Head of caudate nucleus (tissue), 42 donors: ENCODE measurements at regions of chr2 and their contacts with region 1.

Region 1: DNA sequence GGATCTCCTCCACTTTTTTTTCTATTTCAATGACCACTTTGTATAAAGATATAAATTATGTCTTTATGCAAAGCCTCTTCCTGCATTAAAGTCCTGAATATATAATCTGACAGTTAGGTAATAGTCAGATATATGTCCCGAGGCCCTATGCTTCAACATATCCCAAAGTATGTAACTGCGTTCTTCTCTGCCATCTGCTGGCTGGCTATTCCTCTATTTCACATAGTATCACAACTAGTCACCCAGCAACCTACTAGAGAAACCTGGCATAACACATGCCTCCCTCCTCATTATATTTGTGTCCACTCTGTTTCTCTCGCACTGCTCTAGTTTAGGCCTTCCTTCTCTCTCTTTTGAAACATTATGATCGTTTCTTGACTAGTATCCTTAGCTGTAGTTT is 640.8 kb downstream of the DPP10 start:
- DNase-seq: peak in 28 of 42 donors; percentile 5 to 67 (median 36)

Region 2: DNA sequence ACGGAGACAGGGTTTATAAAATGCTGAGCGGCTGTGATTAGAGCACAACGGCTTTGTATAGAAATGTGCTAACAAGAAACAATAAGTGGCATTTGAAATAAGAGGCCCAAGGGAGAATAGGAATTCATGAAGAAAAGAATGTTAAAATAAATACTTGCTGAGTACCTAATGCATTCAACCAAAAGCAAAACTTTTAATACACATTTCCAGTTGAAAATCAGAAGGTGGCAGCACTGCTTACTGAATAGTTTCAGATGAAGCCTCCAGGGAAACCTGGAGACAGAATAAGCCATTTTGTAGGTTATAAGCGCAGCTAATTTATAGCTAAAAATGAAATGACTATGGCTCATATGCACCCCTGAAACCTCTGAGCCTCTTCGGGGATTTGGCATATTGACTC is 354.2 kb before region 1 on chr2:
- intact Hi-C with region 1: loop called (anchors 10 kb)
- DNase-seq: peak in 12 of 42 donors; percentile 12 to 65 (median 24)

Region 3: DNA sequence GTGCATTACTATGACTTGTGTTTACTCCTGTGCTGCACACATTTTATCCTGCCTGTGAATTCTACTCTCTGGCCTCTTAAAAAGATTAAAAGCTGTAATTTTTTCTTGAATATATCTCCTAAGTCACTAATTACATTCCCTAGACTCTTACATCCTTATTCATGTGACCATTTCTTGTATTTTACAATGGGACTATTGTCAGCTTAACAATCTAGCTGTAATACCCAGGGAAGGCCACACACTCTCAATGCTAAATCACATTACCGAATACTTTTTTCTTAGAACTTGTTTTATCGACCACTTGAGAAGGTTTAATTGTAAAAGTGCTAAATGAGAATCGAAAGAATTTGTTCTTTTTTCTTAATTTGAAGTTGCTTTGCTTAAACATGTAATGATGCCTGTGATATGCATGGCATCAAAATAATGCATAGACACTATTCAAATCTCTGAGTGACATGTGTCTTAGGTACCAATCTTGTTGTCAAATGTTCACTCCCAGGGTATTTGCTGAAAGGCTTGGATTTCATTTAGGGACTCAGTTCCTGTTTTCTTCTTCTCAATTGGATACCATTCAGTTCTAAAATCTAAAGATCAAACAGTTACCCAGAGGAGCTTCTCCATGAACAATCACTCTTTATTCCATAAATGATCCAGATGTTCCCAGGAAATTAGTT is 142.3 kb before region 1 on chr2:
- intact Hi-C with region 1: no loop called
- DNase-seq: no peak

Region 4: DNA sequence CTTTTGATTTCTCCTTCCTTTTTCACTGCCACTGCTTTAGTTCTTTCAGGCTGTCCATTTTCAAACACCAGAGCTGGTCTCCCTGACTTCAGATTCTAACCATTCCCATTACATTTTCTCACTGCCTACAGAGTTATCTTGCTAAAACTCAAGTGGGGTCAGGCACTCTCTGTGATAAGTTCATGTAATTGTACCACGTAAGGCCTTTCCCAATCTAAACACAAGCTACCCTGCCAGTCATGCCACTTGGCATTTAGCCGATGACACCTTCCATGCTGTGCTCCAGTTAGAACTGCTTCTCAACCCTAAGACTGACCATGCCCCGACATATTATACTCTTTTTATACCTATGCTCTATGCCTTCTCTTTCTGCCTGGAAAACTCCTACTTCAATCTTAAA is 48.4 kb before region 1 on chr2:
- intact Hi-C with region 1: no loop called
- DNase-seq: no peak

Region 5: GRCh38 chr2:116669782-116670181 is 1586.6 kb after region 1 on chr2:
- intact Hi-C with region 1: no loop called
- DNase-seq: no peak